Activated T-helper 1 cell treated with anti-CD3 and anti-CD28 coated beads, Interleukin-12 subunit alpha, Interleukin-12 subunit beta, Interleukin-2, Interleukin-4 antibody, amounts not matched to agents 30 ng/mL and 10 ng/mL and 1 ng/mL, durations not matched to agents 14 hours and 24 hours and 36 hours (primary cell): ENCODE measurements at regions of chr11 and their contacts with region 1.

Region 1: GRCh38 chr11:122781378-122782195 is 56.7 kb upstream of the CRTAM start:
- DNase-seq: peak; percentile 50
- H3K4me3 Mint-ChIP-seq: no peak overlapping the region
- H3K27ac Mint-ChIP-seq: no peak overlapping the region
- H3K4me1 Mint-ChIP-seq: peaks cover 12% of the 10 kb centered on the region
- H3K27me3 Mint-ChIP-seq: peaks cover 10% of the 10 kb centered on the region

Region 2: DNA sequence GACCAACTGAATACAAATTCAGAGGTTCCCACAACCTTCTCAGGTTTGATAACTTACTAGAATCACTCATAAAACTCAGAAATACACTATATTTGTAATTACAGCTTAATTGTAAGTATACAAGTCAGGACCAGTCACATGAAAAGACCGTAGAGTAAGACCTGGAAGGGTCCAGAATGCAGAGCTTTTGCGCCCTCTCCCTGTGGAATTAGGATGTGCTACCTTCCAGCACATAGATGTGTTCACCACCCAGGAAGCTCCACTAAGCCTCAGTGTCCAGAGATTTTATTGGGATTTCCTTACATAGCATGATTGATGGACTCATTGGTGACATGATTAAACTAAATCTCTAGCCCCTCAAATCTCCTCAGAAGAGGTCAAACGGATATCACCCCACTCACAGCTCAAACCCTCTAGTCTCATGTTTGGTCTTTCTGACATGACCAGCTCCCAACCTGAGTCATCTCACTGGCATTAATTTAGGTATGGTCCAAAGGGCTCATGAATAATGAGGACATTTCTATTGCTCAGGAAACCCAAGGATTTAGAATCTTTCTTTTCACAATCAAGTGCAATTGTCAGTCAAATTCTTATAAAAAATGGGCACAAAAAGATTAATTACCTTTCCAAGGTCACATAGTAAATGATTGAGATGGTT is 203.3 kb before region 1 on chr11:
- intact Hi-C with region 1: loop called (anchors 1 kb)
- DNase-seq: no peak
- H3K4me3 Mint-ChIP-seq: no peak overlapping the region
- H3K27ac Mint-ChIP-seq: no peak overlapping the region
- H3K4me1 Mint-ChIP-seq: peaks cover 12% of the 10 kb centered on the region
- H3K27me3 Mint-ChIP-seq: peaks cover 7% of the 10 kb centered on the region

Region 3: DNA sequence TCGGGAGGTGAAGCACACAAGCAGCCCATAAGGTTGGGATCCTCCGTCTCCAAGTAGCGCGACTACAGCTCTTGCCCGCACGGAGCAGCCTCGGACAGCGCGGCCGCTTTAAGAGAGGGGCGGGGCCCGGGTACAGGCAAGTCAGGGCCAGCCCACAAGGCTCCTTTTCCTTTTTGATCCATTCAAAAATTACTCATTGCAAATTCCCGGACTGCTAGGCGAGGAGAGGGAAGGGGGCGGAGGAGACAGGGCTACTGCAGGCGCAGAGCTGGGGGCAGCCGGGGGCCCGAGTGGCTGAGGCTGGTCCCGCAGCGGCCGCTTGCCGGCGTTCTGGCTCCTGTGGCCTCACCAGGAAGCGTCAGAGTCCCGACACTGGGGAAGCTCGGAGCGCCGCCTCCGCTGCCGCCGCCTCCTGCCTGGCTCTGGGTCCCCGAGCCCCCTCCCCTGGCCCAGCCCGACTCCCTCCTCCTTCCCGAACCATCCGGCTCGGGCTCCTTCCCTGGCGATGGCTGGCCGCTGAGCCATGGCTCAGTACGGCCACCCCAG is 126.0 kb before region 1 on chr11 and contains the start of gene UBASH3B:
- intact Hi-C with region 1: loop called (anchors 1 kb)
- DNase-seq: peak; percentile 48
- H3K4me3 Mint-ChIP-seq: peak within 1 kb of the TSS; percentile 94
- H3K27ac Mint-ChIP-seq: peak within 1 kb of the TSS; percentile 88
- H3K4me1 Mint-ChIP-seq: peaks cover 13% of the 10 kb centered on the region
- H3K27me3 Mint-ChIP-seq: peaks cover 65% of the 10 kb centered on the region
- total RNA-seq, gene UBASH3B: 17.9 and 18.3 TPM in 2 replicates

Region 4: GRCh38 chr11:122721964-122722266 is 59.7 kb before region 1 on chr11:
- intact Hi-C with region 1: loop called (anchors 2 kb)
- DNase-seq: no peak
- H3K4me3 Mint-ChIP-seq: no peak overlapping the region
- H3K27ac Mint-ChIP-seq: no peak overlapping the region
- H3K4me1 Mint-ChIP-seq: peaks cover 50% of the 10 kb centered on the region
- H3K27me3 Mint-ChIP-seq: peaks cover 12% of the 10 kb centered on the region

Region 5: DNA sequence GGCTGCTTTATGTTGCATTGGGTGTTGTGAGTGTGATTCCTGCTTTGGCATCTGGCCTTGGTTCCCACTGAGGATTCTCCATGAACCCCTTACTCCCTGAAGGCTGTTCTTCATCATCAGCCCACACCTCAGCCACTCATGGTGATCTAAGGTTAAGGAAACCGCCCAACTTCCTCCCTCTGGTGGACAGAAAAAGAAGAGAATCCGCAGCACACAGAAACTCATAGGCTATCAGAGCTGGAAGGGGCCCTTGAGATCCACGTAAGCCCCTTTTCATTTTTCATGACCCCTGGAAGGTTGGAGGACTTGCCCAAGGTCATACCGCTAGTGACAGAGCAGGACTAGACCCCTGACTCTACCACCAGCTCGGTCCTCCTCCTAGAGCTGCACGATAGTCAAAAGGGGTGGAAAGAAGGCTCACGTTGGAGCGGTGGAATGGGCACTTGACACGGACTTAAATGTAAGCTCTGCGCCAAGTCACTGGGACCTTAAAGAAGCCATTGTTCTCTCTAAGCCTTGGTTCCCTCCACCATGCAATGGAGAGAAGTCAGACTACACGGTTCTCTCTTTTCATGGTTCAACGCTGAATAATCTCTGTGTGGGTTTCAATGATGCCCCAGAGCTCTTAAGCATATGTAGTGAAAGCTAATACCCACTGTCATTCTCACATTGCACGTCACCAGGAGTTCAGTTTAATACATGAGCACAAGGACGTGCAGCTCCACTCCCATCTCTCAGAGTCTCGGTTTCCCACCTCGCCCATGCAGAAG is 26.8 kb before region 1 on chr11:
- intact Hi-C with region 1: loop called (anchors 1 kb)
- DNase-seq: peak; percentile 8
- H3K4me3 Mint-ChIP-seq: no peak overlapping the region
- H3K27ac Mint-ChIP-seq: no peak overlapping the region
- H3K4me1 Mint-ChIP-seq: peaks cover 46% of the 10 kb centered on the region
- H3K27me3 Mint-ChIP-seq: peaks cover 4% of the 10 kb centered on the region

Region 6: GRCh38 chr11:123100379-123101085 is 318.9 kb after region 1 on chr11:
- intact Hi-C with region 1: no loop called
- DNase-seq: no peak
- H3K4me3 Mint-ChIP-seq: peak overlapping the region; percentile 29
- H3K27ac Mint-ChIP-seq: peak overlapping the region; percentile 61
- H3K4me1 Mint-ChIP-seq: peaks cover 38% of the 10 kb centered on the region
- H3K27me3 Mint-ChIP-seq: peaks cover 6% of the 10 kb centered on the region